ENCODE measurements at regions of chr1 and their contacts with region 1.

Region 1: DNA sequence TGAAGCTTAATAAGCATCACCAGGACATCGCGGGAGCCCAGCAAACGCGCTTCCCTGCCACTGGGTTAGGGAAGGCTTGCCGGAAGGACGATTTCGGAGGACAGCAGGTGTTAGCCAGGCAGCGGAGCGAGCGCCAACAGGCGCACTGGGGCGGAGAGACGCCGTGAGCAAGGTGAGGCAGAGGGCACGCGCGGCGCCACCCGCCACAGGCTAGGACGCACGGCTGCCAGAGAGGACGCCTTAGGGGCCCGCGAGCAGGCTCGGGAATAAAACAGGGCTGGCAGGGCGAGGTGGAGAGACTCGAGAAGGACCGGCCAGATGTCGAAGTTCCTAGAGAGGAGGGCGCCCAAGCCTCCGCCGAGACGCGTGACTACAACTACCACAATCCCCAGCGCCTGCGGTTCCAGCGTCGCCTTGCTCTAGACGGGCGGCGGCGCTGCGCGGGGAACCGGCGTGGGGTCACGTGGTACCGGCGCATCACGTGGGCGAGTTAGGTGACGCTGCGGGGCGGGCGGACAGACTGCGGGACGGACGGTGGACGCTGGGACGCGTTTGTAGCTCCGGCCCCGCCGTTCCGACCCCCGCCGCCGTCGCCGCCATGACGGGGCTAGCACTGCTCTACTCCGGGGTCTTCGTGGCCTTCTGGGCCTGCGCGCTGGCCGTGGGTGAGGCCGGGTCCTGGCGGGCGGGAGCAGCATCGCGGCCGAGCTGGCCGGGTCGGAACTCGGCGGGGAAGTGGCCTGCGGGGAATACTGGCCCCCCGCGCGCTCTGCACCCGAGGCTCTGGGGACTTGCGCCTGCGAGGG is at the start of gene ATP6V0B:
- DNase-seq: peak; percentile 99
- ATAC-seq: peak; percentile 76
- H3K4me3 Mint-ChIP-seq: peak within 1 kb of the TSS; percentile 81
- H3K27ac Mint-ChIP-seq: peak within 1 kb of the TSS; percentile 88
- H3K4me1 Mint-ChIP-seq: peaks cover 48% of the 10 kb centered on the region
- H3K27me3 Mint-ChIP-seq: no peaks in the 10 kb centered on the region
- total RNA-seq, gene ATP6V0B: 39.4 to 75.6 TPM

Region 2: DNA sequence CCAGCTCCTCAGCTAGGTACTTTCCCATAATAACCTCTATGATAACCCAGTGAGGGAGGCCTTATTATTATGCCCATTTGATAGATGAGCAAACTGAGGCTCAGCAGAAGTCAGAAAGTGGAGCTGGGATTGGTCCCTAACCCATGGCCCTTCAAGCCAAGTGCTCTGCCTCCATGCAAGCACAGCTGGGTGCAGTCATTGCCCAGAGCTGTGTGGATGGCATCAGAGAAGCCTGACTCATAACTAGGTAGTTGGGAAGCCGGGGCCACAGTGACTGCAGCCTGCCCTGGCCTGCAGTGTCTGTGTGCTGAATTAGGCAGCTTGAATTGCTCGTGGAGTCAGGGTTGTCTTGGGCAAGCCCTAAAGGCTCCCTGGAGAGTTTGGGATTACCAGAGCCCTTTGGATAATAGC is 926.0 kb before region 1 on chr1:
- CTCF ChIA-PET with region 1: no interaction called
- POLR2A ChIA-PET with region 1: no interaction called
- intact Hi-C with region 1: no loop called
- DNase-seq: peak; percentile 25
- ATAC-seq: no peak
- H3K4me3 Mint-ChIP-seq: no peak overlapping the region
- H3K27ac Mint-ChIP-seq: no peak overlapping the region
- H3K4me1 Mint-ChIP-seq: no peaks in the 10 kb centered on the region
- H3K27me3 Mint-ChIP-seq: no peaks in the 10 kb centered on the region

Region 3: GRCh38 chr1:43367904-43368645 is 606.6 kb before region 1 on chr1 and contains the start of gene ELOVL1:
- CTCF ChIA-PET with region 1: no interaction called
- POLR2A ChIA-PET with region 1: no interaction called
- intact Hi-C with region 1: loop called in 1 of 2 experiments (anchors 5 kb)
- DNase-seq: peak; percentile 94
- ATAC-seq: peak; percentile 83
- H3K4me3 Mint-ChIP-seq: peak within 1 kb of the TSS; percentile 90
- H3K27ac Mint-ChIP-seq: peak within 1 kb of the TSS; percentile 93
- H3K4me1 Mint-ChIP-seq: peaks cover 30% of the 10 kb centered on the region
- H3K27me3 Mint-ChIP-seq: no peaks in the 10 kb centered on the region
- total RNA-seq, gene ELOVL1: 56.0 to 72.1 TPM

Region 4: GRCh38 chr1:43454266-43455011 is 520.2 kb before region 1 on chr1:
- CTCF ChIA-PET with region 1: no interaction called
- POLR2A ChIA-PET with region 1: no interaction called
- intact Hi-C with region 1: loop called in 1 of 2 experiments (anchors 5 kb)
- DNase-seq: peak; percentile 78
- ATAC-seq: peak; percentile 92
- H3K4me3 Mint-ChIP-seq: peak overlapping the region; percentile 79
- H3K27ac Mint-ChIP-seq: peak overlapping the region; percentile 79
- H3K4me1 Mint-ChIP-seq: peaks cover 17% of the 10 kb centered on the region
- H3K27me3 Mint-ChIP-seq: peaks cover 16% of the 10 kb centered on the region

Region 5: GRCh38 chr1:43991476-43992231 is 17.0 kb after region 1 on chr1 and contains the start of gene CCDC24:
- CTCF ChIA-PET with region 1: no interaction called
- POLR2A ChIA-PET with region 1: interaction called, 3 read pairs
- intact Hi-C with region 1: loop called (anchors 1 to 2 kb)
- DNase-seq: peak; percentile 82
- ATAC-seq: peak; percentile 82
- H3K4me3 Mint-ChIP-seq: peak within 1 kb of the TSS; percentile 79
- H3K27ac Mint-ChIP-seq: peak within 1 kb of the TSS; percentile 65
- H3K4me1 Mint-ChIP-seq: peaks cover 8% of the 10 kb centered on the region
- H3K27me3 Mint-ChIP-seq: no peaks in the 10 kb centered on the region
- total RNA-seq, gene CCDC24: 1.2 to 2.0 TPM

Region 6: DNA sequence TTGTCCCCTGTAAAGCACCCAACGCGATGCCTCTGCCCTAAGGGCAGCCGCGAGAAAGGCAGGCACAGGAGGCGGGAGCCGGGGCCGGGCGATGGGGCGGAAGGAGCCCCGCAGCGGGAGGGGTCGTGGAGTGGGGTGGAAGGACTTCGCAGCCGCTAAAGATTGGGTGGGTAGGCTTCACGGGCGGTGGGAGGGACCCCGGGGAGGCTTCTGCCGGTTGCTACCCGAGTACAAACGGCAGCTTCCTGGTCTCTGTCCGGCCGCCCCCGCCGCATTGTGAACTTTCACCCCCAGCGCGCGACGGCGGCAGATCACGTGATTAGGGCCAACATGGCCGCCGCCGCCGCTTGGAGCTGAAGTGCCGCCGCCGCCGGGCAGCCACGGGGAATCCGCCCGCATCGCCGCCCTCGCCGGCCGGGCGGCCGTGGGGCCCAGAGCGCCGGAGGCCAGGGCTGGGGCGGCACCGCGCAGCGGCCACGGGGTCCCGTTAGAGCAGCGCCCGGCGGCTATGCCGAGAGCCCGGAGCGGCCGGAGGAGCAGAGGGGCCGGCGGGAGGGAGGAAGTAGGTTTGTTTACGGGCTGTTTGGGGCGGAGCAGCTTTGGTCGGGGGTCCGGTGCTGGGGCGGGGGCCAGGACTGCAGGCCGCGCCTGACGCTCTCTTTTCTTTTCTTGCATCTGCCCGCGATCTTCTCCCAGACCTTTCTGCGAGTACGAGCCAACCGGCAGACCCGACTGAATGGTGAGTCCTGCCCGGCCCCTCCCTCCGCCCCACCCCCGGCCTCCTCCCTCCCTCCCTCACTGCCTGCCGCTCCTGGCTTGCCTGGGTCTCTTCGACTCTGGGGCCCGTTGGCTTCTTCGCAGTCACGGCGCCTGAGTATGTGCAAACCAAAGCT is 657.2 kb after region 1 on chr1:
- CTCF ChIA-PET with region 1: no interaction called
- POLR2A ChIA-PET with region 1: no interaction called
- intact Hi-C with region 1: loop called in 1 of 2 experiments (anchors 5 kb)
- DNase-seq: peak; percentile 95
- ATAC-seq: peak; percentile 81
- H3K4me3 Mint-ChIP-seq: peak overlapping the region; percentile 86
- H3K27ac Mint-ChIP-seq: peak overlapping the region; percentile 97
- H3K4me1 Mint-ChIP-seq: peaks cover 40% of the 10 kb centered on the region
- H3K27me3 Mint-ChIP-seq: no peaks in the 10 kb centered on the region

Measured in activated CD4-positive, alpha-beta T cell treated with anti-CD3 and anti-CD28 coated beads for 36 hours (primary cell).